ENCODE measurements at regions of chr3 and their contacts with region 1.

Region 1: DNA sequence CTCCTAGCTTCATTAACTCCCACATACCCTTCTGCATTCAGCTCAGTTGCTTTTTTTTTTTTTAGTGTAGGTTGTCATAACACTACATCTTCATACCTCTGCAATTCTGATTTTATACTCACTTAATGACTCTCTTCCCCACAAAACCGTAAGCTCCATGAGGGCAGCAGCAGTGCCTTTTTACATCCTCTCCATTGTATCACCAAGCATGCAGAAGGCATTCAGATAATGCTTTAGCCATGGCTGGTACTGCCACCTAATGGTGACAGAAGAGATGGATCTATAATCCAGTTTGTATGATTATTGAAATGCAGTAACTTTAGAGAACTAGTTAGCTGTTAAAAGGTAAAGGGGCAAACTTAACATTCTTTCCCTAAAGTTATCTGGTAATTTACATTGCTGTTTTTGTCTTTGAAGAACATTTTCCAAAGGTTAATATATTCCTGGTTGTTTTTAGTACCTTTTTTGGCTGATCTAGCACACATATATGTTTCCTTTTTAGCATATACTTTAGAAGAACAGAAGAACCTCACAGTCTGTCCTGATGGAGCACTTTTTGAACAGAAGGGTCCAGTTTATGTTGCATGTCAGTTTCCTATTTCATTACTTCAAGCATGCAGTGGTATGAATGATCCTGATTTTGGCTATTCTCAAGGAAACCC is 36.8 kb downstream of the ATP1B3 start:
- DNase-seq: peak; percentile 62
- CTCF ChIP-seq: peak; percentile 68

Region 2: DNA sequence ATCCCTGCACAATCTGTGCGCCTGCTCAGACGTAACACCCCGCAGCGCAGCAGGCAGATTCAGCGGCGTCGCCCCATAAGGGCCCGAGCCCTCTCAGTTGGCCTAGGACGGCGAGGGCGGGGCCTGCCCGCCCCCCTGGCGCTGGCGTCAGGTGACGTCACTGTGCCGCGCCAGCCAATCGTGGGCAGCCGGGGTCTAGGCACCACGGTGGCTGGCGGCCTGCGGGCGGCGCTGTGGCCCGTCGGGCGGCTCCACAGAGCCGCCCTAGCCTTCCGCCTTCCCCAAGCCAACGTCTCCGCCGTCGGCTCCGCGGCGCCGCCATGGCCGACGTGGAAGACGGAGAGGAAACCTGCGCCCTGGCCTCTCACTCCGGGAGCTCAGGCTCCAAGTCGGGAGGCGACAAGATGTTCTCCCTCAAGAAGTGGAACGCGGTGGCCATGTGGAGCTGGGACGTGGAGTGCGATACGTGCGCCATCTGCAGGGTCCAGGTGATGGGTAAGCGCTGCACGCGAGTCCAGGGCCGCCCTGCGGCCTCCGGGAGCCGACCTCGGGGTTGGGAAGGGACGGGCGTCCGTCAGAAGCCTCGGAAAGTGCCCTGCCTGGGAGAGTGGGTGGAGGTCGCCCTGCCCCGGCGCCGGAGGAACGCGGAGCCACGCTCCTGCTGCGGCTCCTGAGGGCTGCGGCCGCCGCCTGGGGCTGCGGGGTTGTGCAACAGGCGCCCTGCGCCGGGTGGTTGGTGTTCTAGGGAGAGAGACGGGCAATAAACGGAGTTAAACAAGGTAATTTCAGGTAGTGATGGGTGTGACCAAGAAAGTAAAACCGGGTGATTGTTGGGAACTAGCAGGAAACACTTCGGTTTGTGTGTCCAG is 175.0 kb before region 1 on chr3 and contains the start of gene RNF7:
- CTCF ChIA-PET with region 1: interaction called, 13 read pairs
- POLR2A ChIA-PET with region 1: no interaction called
- DNase-seq: peak; percentile 97
- CTCF ChIP-seq: peak; percentile 87

Region 3: DNA sequence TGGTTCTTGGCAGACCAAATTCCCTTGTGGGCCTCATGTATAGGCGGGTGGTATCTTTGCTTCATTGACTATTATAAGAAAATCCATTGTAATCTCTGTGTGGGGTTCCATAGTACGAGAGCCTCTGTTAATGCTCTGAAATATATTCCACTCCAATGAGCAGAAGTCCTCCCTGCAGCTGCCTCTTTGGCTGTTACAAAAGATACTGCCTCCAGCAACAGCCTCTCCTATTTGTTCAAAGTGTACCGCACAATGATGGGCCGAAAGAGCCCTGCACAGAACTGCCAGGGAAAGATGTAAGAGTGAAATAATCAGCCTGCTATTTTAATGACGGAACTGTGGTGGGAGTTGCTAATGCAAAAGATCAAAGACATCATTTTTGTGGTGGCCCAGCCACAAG is 101.2 kb before region 1 on chr3:
- CTCF ChIA-PET with region 1: no interaction called
- POLR2A ChIA-PET with region 1: no interaction called
- DNase-seq: no peak
- CTCF ChIP-seq: no peak

Region 4: GRCh38 chr3:141894524-141895178 is 18.6 kb before region 1 on chr3:
- CTCF ChIA-PET with region 1: interaction called, 18 read pairs
- POLR2A ChIA-PET with region 1: no interaction called
- DNase-seq: no peak
- CTCF ChIP-seq: no peak

Region 5: GRCh38 chr3:141901914-141902313 is 11.4 kb before region 1 on chr3:
- CTCF ChIA-PET with region 1: interaction called, 18 read pairs
- POLR2A ChIA-PET with region 1: no interaction called
- DNase-seq: peak; percentile 15
- CTCF ChIP-seq: no peak

Region 6: DNA sequence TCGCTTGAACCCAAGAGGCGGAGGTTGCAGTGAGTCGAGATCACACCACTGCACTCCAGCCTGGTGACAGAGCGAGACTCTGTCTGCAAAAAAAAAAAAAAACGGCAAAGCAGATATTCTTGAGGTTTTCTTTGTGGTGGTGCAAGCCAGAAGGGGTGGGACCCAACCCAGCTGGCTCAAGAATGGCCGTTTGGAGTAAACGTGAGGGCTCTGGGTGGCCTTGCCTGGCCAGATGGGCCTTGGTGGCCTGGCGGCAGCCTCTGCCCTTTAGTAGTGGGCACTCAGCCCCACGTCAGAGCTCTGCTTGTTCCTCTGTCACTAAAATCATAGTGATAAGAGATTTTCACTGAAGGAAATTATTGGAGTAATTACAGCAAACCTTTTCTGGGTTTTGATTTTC is 13.6 kb after region 1 on chr3:
- CTCF ChIA-PET with region 1: interaction called, 25 read pairs
- POLR2A ChIA-PET with region 1: no interaction called
- DNase-seq: no peak
- CTCF ChIP-seq: no peak